ENCODE measurements at regions of chr1 and their contacts with region 1.

Region 1: DNA sequence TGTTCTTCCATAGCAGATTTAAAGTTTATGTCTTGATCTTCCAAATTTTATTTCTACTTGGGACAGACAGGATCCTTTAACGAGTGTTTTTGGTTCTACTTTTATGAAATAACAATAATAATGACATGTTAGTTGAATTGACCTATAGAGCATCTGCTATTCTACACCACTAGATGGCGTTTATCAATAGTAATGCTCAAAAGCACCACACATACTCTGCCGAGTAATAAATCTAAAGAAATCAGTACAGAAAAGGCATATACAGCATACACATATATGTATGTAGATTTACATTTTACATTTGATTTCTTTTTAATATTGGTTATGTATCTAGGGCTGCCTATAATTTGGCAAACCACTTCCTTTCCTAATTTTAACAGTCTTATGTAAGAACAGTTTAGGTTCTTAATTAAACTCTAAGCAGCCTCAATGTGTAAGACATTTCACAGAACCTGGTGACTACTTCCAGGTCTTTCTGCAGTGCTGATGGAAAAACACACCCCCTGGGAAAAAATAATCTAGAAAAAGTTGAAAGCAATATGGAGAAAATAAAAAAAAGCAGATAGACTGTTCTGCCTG is 5.9 kb upstream of the SIPA1L2 start:
- H3K4me3 Mint-ChIP-seq: no peak overlapping the region
- H3K27ac Mint-ChIP-seq: no peak overlapping the region
- H3K4me1 Mint-ChIP-seq: peaks cover 2% of the 10 kb centered on the region
- H3K27me3 Mint-ChIP-seq: no peaks in the 10 kb centered on the region

Region 2: DNA sequence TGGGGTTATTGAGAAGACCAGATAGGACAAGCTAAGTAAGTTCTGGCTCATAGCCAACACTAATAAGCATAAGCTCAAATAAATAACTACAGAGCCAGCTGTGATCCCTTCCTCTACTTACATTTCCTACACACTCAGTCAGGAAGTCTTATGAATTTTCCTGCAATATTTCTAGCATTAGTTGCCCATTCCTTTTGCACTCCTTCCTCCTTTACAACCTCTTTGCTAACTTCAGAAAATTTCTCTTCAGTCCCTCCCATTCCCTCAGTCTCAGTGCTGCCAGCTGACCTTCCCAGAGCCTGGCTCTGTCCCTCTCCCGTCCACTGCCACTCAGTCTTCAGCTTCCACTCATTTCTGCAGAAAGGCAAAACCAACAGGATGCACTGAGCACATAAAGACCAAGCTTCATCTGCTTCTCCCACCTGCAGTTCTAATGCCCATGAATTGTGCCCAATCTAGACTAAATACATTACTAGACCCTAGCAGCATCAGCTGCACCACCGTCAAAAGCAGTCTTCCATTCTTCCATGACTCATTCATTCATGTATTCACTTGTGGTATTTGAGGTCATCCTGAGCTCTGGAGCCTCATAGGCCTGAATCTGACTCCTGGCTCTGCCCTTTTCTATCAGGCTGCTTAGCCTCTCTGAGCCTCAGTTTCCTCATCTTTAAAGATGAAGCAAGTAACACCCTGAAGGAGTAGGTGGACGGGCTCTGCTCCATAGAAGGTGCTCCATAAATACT is 48.7 kb after region 1 on chr1:
- intact Hi-C with region 1: no loop called
- H3K4me3 Mint-ChIP-seq: no peak overlapping the region
- H3K27ac Mint-ChIP-seq: no peak overlapping the region
- H3K4me1 Mint-ChIP-seq: no peaks in the 10 kb centered on the region
- H3K27me3 Mint-ChIP-seq: peaks cover 2% of the 10 kb centered on the region

Region 3: DNA sequence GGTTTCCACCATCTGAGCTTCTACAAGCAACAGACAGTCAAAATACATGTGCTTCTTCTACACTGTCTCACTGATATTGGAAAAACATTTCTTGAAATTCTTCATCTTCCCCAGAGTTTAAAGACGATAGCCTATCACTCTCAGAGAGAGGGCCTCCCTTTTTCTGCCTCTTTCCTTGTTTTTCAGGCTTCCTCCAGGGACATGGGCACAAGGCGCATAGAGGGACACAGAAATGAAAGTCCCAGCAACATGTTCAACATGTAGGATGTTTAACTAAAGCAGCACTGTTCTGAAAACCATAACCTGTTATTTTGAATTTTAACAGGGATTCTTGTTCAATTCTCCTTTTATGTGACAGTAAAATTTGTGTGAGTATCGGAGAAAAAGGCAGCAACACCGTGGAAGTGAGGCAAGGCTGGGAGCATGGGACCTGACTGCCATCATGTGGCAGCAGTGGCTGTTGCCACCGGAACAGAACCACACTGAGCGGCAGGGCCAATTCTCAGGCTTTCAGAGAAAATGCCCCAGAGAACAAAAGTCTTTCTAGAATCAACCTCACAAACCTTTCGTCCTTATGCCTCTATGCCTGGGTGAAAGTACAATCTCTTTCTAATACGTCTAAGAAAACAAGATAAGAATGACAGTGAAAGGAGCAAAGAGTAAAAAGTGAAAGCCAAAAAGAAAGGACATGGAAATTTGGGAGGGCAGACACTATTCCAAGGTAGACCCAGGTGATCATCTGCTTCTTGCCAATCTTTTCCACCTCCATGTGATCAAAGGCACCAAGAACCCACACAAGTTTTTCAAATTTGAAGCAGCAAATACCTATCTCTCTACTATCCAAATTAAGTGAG is 605.2 kb after region 1 on chr1:
- intact Hi-C with region 1: loop called (anchors 1 kb)
- H3K4me3 Mint-ChIP-seq: peak overlapping the region; percentile 46
- H3K27ac Mint-ChIP-seq: no peak overlapping the region
- H3K4me1 Mint-ChIP-seq: peaks cover 17% of the 10 kb centered on the region
- H3K27me3 Mint-ChIP-seq: no peaks in the 10 kb centered on the region